ENCODE measurements at regions of chr6 and their contacts with region 1.

Region 1: DNA sequence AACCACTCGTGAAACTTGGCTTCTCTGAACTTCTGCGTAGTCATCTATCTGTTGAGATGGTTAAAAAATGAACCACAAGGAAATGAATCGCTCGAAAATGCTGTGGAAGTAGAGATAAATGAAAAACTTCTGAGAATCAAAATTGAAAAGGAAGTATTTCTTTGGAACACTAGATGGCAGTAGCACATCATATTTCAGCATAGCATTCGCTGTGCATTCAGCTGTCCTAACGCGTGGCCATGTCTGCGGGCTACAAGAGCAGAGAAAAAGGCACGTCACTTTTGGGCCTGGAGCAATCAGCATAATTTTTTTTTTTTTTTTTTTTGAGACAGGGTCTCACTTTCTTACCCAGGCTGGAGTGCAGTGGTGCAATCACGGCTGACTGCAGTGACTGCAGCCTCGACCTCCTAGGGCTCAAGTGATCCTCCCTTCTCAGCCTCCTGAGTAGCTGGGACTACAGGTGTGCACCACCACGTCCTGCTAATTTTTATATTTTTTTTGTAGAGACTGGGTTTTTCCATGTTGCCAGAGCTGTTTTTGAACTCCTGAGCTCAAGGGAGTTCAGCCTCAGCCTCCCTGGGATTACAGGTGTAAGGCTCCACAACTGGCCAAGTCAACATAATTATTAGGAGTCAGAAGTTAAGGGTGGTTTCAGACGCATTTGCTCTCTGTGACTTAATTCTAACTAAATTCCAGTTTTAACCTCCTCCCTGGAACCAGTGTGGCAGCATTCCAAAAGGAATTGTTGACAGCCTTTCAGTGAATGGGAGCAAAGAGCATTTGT is 8.8 kb upstream of the PERP start:
- DNase-seq: peak; percentile 71
- ATAC-seq: peak; percentile 96
- H3K4me3 ChIP-seq: 0 out of 6 replicates have a peak overlapping the region, but pooled peaks of 1 of the 3 experiments have one; percentile 2
- H3K27ac ChIP-seq: peak overlapping the region; percentile 13
- H3K4me1 ChIP-seq: peaks cover 18% of the 10 kb centered on the region
- H3K27me3 ChIP-seq: no peaks in the 10 kb centered on the region
- CTCF ChIP-seq: peak; percentile 90
- EP300 ChIP-seq: no peak
- POLR2A ChIP-seq: no peak
- RAD21 ChIP-seq: peak; percentile 92

Region 2: DNA sequence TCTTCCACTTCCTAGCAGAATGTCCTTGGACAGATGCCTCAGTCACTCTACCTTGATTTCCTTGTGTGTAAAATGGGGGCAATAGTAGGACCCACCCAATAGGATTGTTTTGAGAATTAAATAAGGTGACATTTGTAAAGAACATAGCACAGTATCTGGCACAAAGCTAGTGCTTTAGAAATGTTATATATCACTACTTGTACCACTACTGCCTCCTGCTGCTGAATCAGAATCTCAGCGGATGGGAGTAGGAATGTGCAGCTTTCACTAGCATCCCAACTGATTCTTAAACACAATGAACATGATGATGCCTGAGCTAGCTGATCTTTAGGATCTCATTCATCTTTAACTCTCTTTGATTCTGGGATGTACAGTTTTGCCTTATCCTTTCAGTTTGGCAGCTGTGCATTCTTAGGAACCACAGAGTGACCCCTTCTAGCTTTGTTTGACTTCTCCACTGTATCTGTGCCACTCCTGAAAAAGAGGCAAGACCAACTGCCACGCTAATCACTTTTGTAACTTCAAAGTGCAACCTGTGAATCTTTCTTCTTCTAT is 95.0 kb after region 1 on chr6:
- CTCF ChIA-PET with region 1: no interaction called
- POLR2A ChIA-PET with region 1: no interaction called
- in situ Hi-C with region 1: no loop called
- intact Hi-C with region 1: loop called (anchors 2 kb)
- DNase-seq: no peak
- ATAC-seq: peak; percentile 50
- H3K4me3 ChIP-seq: no peak overlapping the region
- H3K27ac ChIP-seq: no peak overlapping the region
- H3K4me1 ChIP-seq: no peaks in the 10 kb centered on the region
- H3K27me3 ChIP-seq: no peaks in the 10 kb centered on the region
- CTCF ChIP-seq: peak; percentile 54
- EP300 ChIP-seq: no peak
- POLR2A ChIP-seq: no peak
- RAD21 ChIP-seq: no peak

Region 3: DNA sequence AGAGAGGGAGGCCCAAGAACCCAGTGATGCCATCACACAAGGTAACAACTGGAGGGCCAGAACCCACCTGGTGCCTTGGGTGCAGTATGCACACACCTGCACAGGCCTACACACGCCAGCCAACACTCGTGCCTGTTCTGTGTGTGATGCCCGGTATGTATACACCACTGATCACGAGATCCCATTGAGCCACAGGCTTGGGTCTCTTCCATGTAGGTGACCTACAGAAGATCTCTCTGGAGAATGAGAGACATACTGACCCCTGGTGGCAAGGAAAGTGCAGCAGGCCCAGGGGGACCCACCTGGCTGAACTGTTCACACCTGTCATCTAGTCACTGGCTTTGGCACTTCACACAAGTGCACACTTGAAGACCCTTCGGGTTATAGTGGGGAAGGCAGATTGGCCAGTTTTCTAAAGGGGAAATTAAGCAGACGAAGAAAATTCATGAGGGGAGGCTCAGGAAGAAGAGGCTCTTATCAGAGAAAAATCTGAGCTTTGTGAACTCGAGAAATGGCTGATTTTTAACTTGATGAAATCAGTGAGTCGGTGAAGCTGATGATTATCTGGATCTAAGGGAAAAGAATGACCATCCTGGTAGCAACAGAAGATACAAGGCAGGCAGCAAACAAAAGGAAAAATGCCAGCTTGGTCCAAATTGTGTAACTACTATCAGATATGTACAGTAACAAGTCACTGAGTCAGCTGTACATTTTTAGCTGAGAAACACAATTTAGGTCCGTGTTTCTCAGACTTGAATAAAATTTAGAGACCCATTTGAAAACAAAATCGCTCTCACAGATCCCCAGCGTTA is 171.3 kb after region 1 on chr6:
- CTCF ChIA-PET with region 1: interaction called, 53 read pairs
- POLR2A ChIA-PET with region 1: no interaction called
- in situ Hi-C with region 1: loop called (anchors 5 kb)
- intact Hi-C with region 1: loop called (anchors 1 kb)
- DNase-seq: peak; percentile 58
- ATAC-seq: peak; percentile 85
- H3K4me3 ChIP-seq: no peak overlapping the region
- H3K27ac ChIP-seq: no peak overlapping the region
- H3K4me1 ChIP-seq: 0 out of 2 replicates have a peak, but pooled peaks cover 5% of the 10 kb centered on the region
- H3K27me3 ChIP-seq: no peaks in the 10 kb centered on the region
- CTCF ChIP-seq: peak; percentile 95
- EP300 ChIP-seq: no peak
- POLR2A ChIP-seq: no peak
- RAD21 ChIP-seq: peak; percentile 83

Region 4: DNA sequence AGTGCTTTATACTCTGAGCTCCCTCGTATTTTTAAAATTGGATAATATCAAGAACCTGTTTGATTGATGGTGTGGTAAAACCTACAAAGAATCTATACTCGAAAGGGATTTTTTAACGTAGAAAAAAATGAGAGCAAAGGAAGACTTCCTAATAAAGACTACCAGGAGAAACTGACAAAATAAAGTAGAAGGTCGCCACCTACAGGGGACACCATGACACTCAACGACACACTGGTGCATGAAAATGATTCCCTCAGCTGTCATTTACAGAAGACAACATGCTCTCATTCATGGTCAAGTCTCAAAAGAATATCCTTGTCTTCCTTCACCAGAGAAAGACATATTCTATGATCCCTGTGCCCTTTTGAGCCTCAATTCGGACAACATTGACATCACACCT is 393.3 kb after region 1 on chr6:
- CTCF ChIA-PET with region 1: no interaction called
- POLR2A ChIA-PET with region 1: no interaction called
- in situ Hi-C with region 1: loop called (anchors 5 kb)
- intact Hi-C with region 1: loop called (anchors 5 kb)
- DNase-seq: peak; percentile 71
- ATAC-seq: peak; percentile 31; the same call in 2 of the 3 replicates
- H3K4me3 ChIP-seq: no peak overlapping the region
- H3K27ac ChIP-seq: no peak overlapping the region
- H3K4me1 ChIP-seq: peaks cover 54% of the 10 kb centered on the region
- H3K27me3 ChIP-seq: no peaks in the 10 kb centered on the region
- CTCF ChIP-seq: peak; percentile 90
- EP300 ChIP-seq: no peak
- POLR2A ChIP-seq: no peak
- RAD21 ChIP-seq: peak; percentile 63; the same call in 1 of the 2 replicates